ENCODE measurements at regions of chr20 and their contacts with region 1.

Region 1: DNA sequence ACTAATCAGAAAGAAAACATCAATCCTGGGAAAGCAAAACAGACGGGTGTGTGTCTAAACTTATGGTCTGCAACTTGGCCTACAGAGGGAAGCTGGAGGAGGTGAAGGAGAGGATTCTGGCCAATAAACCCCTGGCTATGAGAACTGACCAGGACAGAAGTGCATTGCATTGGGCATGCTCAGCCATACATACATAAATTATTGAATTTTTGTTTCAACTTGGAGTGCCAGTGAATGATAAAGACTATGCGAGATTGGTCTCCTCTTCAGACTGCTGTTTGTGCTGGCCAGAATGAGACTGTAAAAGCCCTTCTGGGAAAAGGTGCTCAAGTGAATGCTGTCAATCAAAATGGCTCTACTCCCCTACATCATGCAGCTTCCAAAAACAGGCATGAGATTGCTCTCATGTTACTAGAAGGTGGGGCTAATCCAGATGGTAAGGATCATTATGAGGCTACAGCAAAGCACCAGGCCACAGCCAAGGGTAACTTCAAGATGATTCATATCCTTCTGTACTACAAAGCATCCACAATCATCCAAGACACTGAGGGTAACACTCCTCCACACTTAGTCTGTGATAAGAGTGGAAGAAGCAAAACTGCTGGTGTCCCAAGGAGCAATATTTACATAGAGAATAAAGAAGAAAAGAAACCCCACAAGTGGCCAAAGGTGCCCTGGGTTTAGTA is 17.4 kb downstream of the ADNP start:
- DNase-seq: no peak
- H3K4me3 ChIP-seq: no peak overlapping the region
- H3K4me3 Mint-ChIP-seq: no peak overlapping the region
- H3K27ac Mint-ChIP-seq: peak overlapping the region; percentile 75
- H3K4me1 ChIP-seq: peaks cover 64% of the 10 kb centered on the region
- H3K4me1 Mint-ChIP-seq: peaks cover 82% of the 10 kb centered on the region
- H3K27me3 ChIP-seq: no peaks in the 10 kb centered on the region
- H3K27me3 Mint-ChIP-seq: no peaks in the 10 kb centered on the region
- CTCF ChIP-seq: no peak

Region 2: DNA sequence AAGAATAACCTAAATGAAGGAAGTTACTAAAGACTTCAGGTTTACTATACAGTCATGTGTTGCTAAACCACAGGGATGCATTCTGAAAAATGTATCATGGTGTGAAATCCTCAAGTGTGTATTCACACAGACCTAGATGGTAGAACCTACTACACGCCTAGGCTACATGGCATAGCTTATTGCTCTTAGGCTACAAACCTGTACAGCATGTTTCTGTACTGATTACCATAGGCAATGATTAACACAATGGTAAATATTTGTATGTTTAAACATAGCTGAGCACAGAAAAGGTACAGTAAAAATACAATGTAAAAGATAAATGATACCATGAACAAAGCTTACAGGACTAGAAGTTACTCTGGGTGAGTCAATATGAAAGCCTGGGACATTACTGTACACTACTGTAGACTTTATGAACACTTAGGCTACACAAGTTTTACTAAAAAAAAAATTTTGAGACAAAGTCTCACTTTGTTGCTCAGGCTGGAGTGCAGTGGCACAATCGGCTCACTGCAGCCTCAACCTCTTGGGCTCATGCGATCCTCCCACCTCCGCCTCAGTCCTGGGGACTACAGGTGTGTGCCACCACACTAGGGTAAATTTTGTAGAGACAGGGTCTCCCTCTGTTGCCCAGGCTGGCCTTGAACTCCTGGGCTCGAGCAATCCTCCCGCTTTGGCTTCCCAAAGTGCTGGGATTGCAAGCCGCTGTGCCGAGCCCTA is 18.6 kb before region 1 on chr20:
- CTCF ChIA-PET with region 1: interaction called, 3 read pairs
- POLR2A ChIA-PET with region 1: no interaction called
- intact Hi-C with region 1: loop called (anchors 1 kb)
- DNase-seq: peak in 1 of 2 experiments; percentile 73
- H3K4me3 ChIP-seq: no peak overlapping the region
- H3K4me3 Mint-ChIP-seq: no peak overlapping the region
- H3K27ac Mint-ChIP-seq: no peak overlapping the region
- H3K4me1 ChIP-seq: peaks cover 15% of the 10 kb centered on the region
- H3K4me1 Mint-ChIP-seq: peaks cover 14% of the 10 kb centered on the region
- H3K27me3 ChIP-seq: no peaks in the 10 kb centered on the region
- H3K27me3 Mint-ChIP-seq: no peaks in the 10 kb centered on the region
- CTCF ChIP-seq: no peak

Region 3: GRCh38 chr20:51249215-51249614 is 335.4 kb after region 1 on chr20:
- CTCF ChIA-PET with region 1: no interaction called
- POLR2A ChIA-PET with region 1: no interaction called
- intact Hi-C with region 1: no loop called
- DNase-seq: no peak
- H3K4me3 ChIP-seq: no peak overlapping the region
- H3K4me3 Mint-ChIP-seq: no peak overlapping the region
- H3K27ac Mint-ChIP-seq: no peak overlapping the region
- H3K4me1 ChIP-seq: no peaks in the 10 kb centered on the region
- H3K4me1 Mint-ChIP-seq: no peaks in the 10 kb centered on the region
- H3K27me3 ChIP-seq: no peaks in the 10 kb centered on the region
- H3K27me3 Mint-ChIP-seq: peaks cover 8% of the 10 kb centered on the region
- CTCF ChIP-seq: no peak

Measured in Caco-2 (cell line).